B cell (primary cell): ENCODE measurements at regions of chr20 and their contacts with region 1.

Region 1: DNA sequence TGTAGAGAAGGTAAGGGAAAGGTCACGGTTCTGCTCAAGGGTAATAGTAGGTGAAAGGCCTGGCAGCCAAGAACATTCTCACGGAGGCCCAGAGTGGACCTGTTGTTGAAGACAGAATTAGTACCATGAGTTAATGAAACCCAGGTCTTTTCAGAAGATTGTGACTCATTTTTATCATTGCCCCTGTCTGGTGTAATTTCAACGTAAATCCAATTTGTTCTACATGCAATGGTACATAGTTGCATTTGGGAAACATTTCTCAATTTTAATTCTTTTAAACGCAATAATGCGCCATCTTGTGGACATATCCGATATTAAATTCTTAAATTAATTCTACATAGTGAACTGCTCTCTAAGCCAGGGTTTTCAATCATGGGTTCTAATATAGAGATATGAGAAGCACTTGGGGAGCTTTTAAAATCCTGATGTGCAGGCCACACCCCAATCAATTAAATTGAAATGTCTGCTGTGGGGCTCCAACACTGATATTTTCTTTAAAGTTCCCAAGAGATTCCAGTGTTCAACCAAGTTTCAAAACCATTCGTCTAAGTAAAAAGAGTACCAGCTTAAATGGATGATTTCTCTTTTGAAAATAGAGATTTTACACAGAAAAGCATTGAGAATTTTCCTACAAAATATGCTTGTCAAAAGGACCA is 257.4 kb downstream of the PLCB1 start:
- DNase-seq: peak; percentile 47
- ATAC-seq: no peak
- H3K4me3 ChIP-seq: no peak overlapping the region
- H3K4me3 Mint-ChIP-seq: no peak overlapping the region
- H3K27ac ChIP-seq: no peak overlapping the region
- H3K27ac Mint-ChIP-seq: no peak overlapping the region
- H3K4me1 ChIP-seq: no peaks in the 10 kb centered on the region
- H3K4me1 Mint-ChIP-seq: no peaks in the 10 kb centered on the region
- H3K27me3 ChIP-seq: no peaks in the 10 kb centered on the region
- H3K27me3 Mint-ChIP-seq: peaks cover 5% of the 10 kb centered on the region
- CTCF ChIP-seq: peak; percentile 81

Region 2: DNA sequence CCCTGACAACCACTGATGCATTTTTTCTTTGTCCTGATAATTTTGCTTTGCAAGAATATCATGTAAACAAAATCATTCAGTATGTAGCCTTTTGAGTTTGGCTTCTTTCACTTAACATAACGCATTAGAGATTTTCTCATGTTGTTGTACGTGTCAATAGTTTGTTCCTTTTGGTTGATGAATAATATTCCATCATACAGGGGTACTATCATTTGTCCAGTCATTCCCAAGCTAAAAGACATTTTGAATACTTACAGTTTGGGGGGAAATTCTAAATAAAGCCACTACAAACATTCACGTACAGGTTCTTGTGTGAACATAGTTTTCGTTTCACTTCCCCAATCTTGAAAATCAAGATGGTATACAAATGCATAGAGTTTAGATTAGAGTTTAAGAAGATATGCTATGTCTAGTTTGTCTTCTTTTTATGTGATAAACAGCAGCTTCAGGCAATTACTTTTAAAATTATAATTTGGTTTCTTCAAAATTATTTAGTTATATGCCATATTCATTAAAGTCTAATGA is 454.4 kb before region 1 on chr20:
- CTCF ChIA-PET with region 1: interaction called, 47 read pairs
- POLR2A ChIA-PET with region 1: no interaction called
- intact Hi-C with region 1: no loop called
- DNase-seq: peak; percentile 14
- ATAC-seq: no peak
- H3K4me3 ChIP-seq: no peak overlapping the region
- H3K4me3 Mint-ChIP-seq: no peak overlapping the region
- H3K27ac ChIP-seq: no peak overlapping the region
- H3K27ac Mint-ChIP-seq: no peak overlapping the region
- H3K4me1 ChIP-seq: peaks cover 3 to 6% of the 10 kb centered on the region in 2 donors
- H3K4me1 Mint-ChIP-seq: peaks cover 13% of the 10 kb centered on the region
- H3K27me3 ChIP-seq: no peaks in the 10 kb centered on the region
- H3K27me3 Mint-ChIP-seq: peaks cover 3% of the 10 kb centered on the region
- CTCF ChIP-seq: no peak

Region 3: GRCh38 chr20:8043687-8044282 is 345.7 kb before region 1 on chr20:
- CTCF ChIA-PET with region 1: interaction called, 71 read pairs
- POLR2A ChIA-PET with region 1: no interaction called
- intact Hi-C with region 1: loop called (anchors 1 kb)
- DNase-seq: peak; percentile 75
- ATAC-seq: peak; percentile 67
- H3K4me3 ChIP-seq: no peak overlapping the region
- H3K4me3 Mint-ChIP-seq: no peak overlapping the region
- H3K27ac ChIP-seq: no peak overlapping the region
- H3K27ac Mint-ChIP-seq: no peak overlapping the region
- H3K4me1 ChIP-seq: no peaks in the 10 kb centered on the region
- H3K4me1 Mint-ChIP-seq: peaks cover 2% of the 10 kb centered on the region
- H3K27me3 ChIP-seq: no peaks in the 10 kb centered on the region
- H3K27me3 Mint-ChIP-seq: peaks cover 7% of the 10 kb centered on the region
- CTCF ChIP-seq: peak; percentile 94

Region 4: GRCh38 chr20:8131598-8132483 is 257.7 kb before region 1 on chr20 and contains the start of gene PLCB1:
- CTCF ChIA-PET with region 1: interaction called, 3 read pairs
- POLR2A ChIA-PET with region 1: no interaction called
- intact Hi-C with region 1: loop called (anchors 2 kb)
- DNase-seq: peak; percentile 49
- ATAC-seq: peak; percentile 90
- H3K4me3 ChIP-seq: peak within 1 kb of the TSS in 4 of 5 experiments; percentile 6 to 66 (median 28)
- H3K4me3 Mint-ChIP-seq: peak within 1 kb of the TSS; percentile 57
- H3K27ac ChIP-seq: no peak within 1 kb of the TSS
- H3K27ac Mint-ChIP-seq: no peak within 1 kb of the TSS
- H3K4me1 ChIP-seq: peaks cover 12 to 14% of the 10 kb centered on the region in 2 donors
- H3K4me1 Mint-ChIP-seq: peaks cover 15% of the 10 kb centered on the region
- H3K27me3 ChIP-seq: peaks cover 0 to 10% (median 9%) of the 10 kb centered on the region in 4 experiments
- H3K27me3 Mint-ChIP-seq: peaks cover 32% of the 10 kb centered on the region
- CTCF ChIP-seq: peak; percentile 45
- total RNA-seq, gene PLCB1: 0.34 and 0.47 TPM in 2 replicates

Region 5: DNA sequence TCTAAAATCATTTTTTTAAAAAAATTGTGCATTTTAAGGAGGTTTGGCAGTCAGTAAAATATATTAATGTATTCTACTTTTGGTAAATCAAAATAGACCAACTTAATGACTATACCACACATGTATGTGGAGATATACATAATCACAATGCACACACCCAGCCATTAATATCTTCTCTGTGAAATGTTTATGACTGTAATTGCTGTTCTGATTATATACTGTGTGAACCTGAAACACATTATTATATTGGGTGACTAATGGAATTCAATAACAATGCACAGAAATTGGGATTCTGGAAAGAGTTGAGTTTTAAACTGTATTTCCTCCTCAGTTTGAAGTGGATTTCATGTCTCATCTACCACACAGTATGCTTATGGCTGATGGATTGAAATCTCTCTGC is 23.9 kb before region 1 on chr20:
- CTCF ChIA-PET with region 1: no interaction called
- POLR2A ChIA-PET with region 1: no interaction called
- intact Hi-C with region 1: no loop called
- DNase-seq: no peak
- ATAC-seq: no peak
- H3K4me3 ChIP-seq: no peak overlapping the region
- H3K4me3 Mint-ChIP-seq: no peak overlapping the region
- H3K27ac ChIP-seq: no peak overlapping the region
- H3K27ac Mint-ChIP-seq: no peak overlapping the region
- H3K4me1 ChIP-seq: no peaks in the 10 kb centered on the region
- H3K4me1 Mint-ChIP-seq: peaks cover 5% of the 10 kb centered on the region
- H3K27me3 ChIP-seq: no peaks in the 10 kb centered on the region
- H3K27me3 Mint-ChIP-seq: peaks cover 5% of the 10 kb centered on the region
- CTCF ChIP-seq: no peak

Region 6: DNA sequence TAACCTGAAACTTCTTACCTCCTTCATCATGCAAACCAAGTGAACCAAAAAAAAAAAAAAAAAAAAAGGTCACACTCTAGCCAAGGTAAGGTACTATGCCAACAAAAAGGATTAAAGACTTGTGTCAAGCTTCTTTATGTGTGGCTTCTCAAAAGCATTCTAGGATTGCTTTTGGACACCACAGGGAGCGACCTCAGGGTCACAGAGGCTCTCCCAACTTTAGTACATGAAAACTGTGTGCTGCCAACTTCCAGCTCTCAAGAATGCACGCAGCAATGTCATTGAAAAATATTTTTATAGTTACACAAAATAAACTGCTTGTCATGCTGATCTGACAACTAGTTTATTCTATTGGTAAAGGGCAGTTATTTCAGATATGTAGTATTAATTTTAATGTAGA is 13.6 kb before region 1 on chr20:
- CTCF ChIA-PET with region 1: interaction called, 11 read pairs
- POLR2A ChIA-PET with region 1: no interaction called
- intact Hi-C with region 1: no loop called
- DNase-seq: no peak
- ATAC-seq: no peak
- H3K4me3 ChIP-seq: no peak overlapping the region
- H3K4me3 Mint-ChIP-seq: no peak overlapping the region
- H3K27ac ChIP-seq: no peak overlapping the region
- H3K27ac Mint-ChIP-seq: no peak overlapping the region
- H3K4me1 ChIP-seq: no peaks in the 10 kb centered on the region
- H3K4me1 Mint-ChIP-seq: no peaks in the 10 kb centered on the region
- H3K27me3 ChIP-seq: no peaks in the 10 kb centered on the region
- H3K27me3 Mint-ChIP-seq: peaks cover 4% of the 10 kb centered on the region
- CTCF ChIP-seq: no peak

Region 7: GRCh38 chr20:8399947-8400346 is 10.4 kb after region 1 on chr20:
- CTCF ChIA-PET with region 1: interaction called, 22 read pairs
- POLR2A ChIA-PET with region 1: no interaction called
- intact Hi-C with region 1: no loop called
- DNase-seq: peak; percentile 76
- ATAC-seq: peak; percentile 89
- H3K4me3 ChIP-seq: no peak overlapping the region
- H3K4me3 Mint-ChIP-seq: no peak overlapping the region
- H3K27ac ChIP-seq: peak overlapping the region in 1 of 2 donors; percentile 10
- H3K27ac Mint-ChIP-seq: no peak overlapping the region
- H3K4me1 ChIP-seq: peaks cover 8 to 19% of the 10 kb centered on the region in 2 donors
- H3K4me1 Mint-ChIP-seq: peaks cover 12% of the 10 kb centered on the region
- H3K27me3 ChIP-seq: no peaks in the 10 kb centered on the region
- H3K27me3 Mint-ChIP-seq: no peaks in the 10 kb centered on the region
- CTCF ChIP-seq: no peak